ENCODE measurements at regions of chr7 and their contacts with region 1.

Region 1: DNA sequence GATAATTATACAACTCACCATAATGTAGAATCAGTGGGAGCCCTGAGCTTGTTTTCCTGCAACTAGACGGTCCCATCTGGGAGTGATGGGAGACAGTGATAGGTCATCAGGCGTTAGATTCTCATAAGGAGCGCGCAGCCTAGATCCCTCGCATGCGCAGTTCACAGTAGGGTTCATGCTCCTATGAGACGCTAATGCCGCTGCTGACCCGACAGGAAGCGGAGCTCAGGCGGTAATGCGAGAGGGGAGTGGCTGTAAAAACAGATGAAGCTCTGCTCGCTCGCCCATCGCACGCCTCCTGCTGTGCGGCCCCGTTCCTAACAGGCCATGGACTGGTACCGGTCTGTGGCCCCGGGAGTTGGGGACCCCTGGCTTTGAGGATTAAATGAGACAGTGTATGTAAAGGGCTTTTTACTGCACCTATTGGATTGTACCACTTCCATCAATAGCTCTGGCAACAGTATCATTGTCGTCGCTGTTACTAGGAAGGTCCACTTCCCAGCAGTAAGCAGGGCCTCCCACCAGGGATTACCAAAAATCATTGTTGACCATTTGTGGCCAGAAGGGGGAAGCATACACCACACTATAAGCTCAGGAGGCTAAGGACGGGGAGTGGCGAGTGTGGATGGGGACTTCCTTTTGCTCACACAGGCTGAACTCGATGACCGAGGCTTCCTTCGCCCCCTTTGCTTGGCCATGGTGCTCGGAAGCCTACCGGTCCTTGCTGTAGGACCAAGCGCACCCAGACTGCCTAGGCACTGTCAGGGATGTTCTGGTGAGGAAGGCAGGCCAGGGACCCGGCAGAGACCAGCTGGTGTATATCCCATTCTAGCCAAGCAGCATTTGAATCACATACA is 26.4 kb downstream of the AKR1B1 start:
- DNase-seq: peak; percentile 89
- ATAC-seq: peak; percentile 96
- H3K4me3 Mint-ChIP-seq: peak overlapping the region; percentile 71
- H3K27ac Mint-ChIP-seq: peak overlapping the region; percentile 89
- H3K4me1 Mint-ChIP-seq: peaks cover 16% of the 10 kb centered on the region
- H3K27me3 Mint-ChIP-seq: peaks cover 2% of the 10 kb centered on the region

Region 2: GRCh38 chr7:134293002-134293740 is 139.4 kb before region 1 on chr7:
- CTCF ChIA-PET with region 1: no interaction called
- DNase-seq: no peak
- ATAC-seq: no peak
- H3K4me3 Mint-ChIP-seq: no peak overlapping the region
- H3K27ac Mint-ChIP-seq: no peak overlapping the region
- H3K4me1 Mint-ChIP-seq: no peaks in the 10 kb centered on the region
- H3K27me3 Mint-ChIP-seq: no peaks in the 10 kb centered on the region

Region 3: DNA sequence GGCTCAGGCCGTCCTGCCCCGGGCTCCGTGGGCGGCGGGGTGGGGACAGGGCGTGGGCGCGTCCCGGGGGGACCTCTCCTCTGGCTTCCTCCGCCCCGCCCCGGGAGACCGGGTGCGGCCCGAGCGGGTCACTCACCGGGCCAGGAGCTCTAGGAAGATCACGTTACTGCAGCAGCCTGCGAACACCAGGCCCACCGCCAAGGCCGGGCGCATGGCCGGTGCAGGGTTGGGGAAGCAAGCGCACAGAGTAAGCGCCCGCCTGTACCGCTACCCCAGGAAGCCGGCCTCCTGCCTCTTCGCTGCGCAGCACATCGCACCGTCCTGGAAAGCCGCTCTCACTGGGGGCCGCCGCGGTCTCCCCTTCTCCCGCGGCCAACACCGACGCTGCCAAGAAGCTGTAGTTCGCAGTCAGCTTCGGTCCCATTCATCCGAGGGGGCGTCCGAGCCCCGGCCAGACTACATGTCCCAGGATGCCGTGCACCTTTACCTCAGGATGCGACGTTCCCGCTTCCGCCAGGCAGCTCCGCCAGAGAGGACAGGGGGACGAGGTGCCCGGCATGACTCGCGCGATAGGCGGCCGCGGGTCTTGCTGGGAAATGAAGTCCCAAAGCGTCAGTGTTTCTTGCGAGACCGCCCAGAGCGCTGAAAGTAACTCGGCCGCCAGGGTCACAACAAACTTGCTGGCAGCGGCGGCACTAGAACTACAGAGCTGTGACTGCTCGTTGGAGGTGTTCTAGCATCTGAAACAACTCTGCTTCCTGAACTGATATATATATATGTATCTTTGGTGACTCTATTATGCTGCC is 115.8 kb before region 1 on chr7 and contains the start of gene SLC35B4:
- CTCF ChIA-PET with region 1: interaction called, 11 read pairs
- DNase-seq: peak; percentile 98
- ATAC-seq: peak; percentile 98
- H3K4me3 Mint-ChIP-seq: peak within 1 kb of the TSS; percentile 87
- H3K27ac Mint-ChIP-seq: peak within 1 kb of the TSS; percentile 83
- H3K4me1 Mint-ChIP-seq: peaks cover 18% of the 10 kb centered on the region
- H3K27me3 Mint-ChIP-seq: peaks cover 6% of the 10 kb centered on the region
- total RNA-seq, gene SLC35B4: 16.1 to 18.0 TPM

Region 4: GRCh38 chr7:134458806-134459698 is 26.5 kb after region 1 on chr7 and contains the start of gene AKR1B1:
- CTCF ChIA-PET with region 1: interaction called, 38 read pairs
- DNase-seq: peak; percentile 93
- ATAC-seq: peak; percentile 93
- H3K4me3 Mint-ChIP-seq: peak within 1 kb of the TSS; percentile 81
- H3K27ac Mint-ChIP-seq: peak within 1 kb of the TSS; percentile 72
- H3K4me1 Mint-ChIP-seq: peaks cover 43% of the 10 kb centered on the region
- H3K27me3 Mint-ChIP-seq: no peaks in the 10 kb centered on the region
- total RNA-seq, gene AKR1B1: 96.2 to 113 TPM

Region 5: GRCh38 chr7:134514663-134515062 is 82.1 kb after region 1 on chr7:
- CTCF ChIA-PET with region 1: interaction called, 59 read pairs
- DNase-seq: no peak
- ATAC-seq: peak; percentile 74
- H3K4me3 Mint-ChIP-seq: no peak overlapping the region
- H3K27ac Mint-ChIP-seq: no peak overlapping the region
- H3K4me1 Mint-ChIP-seq: peaks cover 8% of the 10 kb centered on the region
- H3K27me3 Mint-ChIP-seq: peaks cover 23% of the 10 kb centered on the region

Region 6: DNA sequence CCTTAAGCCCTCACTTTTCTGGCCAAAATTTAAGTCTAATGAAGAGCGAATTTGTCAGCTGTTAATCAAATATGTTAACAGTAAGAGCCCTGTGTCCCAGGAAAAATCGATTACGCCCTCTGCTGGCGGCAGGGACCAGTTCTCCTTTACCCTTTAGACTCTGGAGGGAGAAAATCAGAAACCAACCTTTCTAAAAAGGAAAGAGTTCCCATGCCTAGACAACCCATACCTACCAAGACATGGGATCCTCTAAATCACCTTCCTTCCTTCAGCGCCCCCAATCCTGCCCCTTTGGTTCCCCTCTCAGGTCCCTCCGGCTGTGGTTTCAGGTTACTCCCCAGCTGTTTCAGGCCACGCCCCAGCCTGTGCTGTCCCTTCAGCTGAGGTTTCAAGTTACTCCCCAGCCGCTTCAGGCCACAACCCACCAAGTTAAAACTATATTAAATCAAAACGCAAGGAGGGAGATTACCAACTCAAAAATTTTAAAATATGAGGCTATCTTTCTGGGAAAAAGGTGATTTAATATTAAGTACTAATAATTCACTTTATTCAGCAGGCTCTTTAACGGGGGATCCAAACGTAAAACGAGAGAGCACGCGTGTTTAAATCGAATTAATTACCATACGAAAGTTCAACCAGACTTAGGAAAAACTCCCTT is 115.0 kb after region 1 on chr7:
- CTCF ChIA-PET with region 1: interaction called, 32 read pairs
- DNase-seq: peak; percentile 71
- ATAC-seq: peak; percentile 81
- H3K4me3 Mint-ChIP-seq: no peak overlapping the region
- H3K27ac Mint-ChIP-seq: no peak overlapping the region
- H3K4me1 Mint-ChIP-seq: peaks cover 9% of the 10 kb centered on the region
- H3K27me3 Mint-ChIP-seq: peaks cover 42% of the 10 kb centered on the region

Region 7: DNA sequence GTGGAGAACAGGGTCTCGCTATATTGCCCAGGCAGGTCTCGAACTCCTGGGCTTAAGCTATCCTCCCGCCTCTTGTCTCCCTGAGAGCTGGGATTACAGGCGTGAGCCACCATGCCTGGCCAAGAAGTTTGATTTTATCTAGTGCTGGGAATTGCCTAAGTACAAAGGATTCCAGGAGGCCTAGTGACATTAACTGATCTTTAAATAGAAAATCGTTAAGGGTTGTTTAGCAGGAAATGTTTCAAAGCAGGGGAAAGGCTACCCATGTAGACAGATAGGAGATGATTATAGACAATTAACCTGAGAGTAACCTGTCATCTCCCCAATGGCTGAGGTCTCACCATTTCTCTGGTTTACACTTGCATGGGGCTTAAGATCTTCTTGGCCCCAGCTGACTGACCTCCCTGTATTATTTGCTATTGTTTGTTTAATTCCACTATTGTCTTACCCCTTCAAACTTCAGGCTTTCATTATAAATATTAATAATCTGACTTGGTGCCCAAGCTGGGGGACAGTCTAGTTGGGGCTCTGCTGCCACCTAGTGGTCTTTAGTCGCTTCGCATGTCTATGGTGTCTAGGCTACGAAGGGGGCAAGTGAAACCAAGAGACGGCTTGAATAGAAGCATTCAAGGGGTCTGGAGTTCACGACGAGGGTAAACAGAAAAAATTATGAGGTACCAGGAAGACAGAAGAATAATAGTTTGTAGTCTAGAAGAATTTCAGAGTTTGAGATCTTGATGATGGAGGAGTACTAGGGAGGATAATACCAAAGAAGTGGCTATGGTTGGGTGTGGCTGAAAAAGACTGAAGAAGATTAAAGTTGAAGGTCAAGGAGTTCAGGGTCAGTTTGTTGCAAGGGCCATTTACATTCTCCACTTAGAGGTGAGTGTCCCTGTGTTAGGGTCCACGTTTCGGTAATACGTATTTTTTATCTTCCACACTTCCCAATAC is 173.7 kb after region 1 on chr7:
- CTCF ChIA-PET with region 1: interaction called, 27 read pairs
- DNase-seq: peak; percentile 73
- ATAC-seq: peak; percentile 93
- H3K4me3 Mint-ChIP-seq: peak overlapping the region; percentile 59
- H3K27ac Mint-ChIP-seq: no peak overlapping the region
- H3K4me1 Mint-ChIP-seq: peaks cover 10% of the 10 kb centered on the region
- H3K27me3 Mint-ChIP-seq: peaks cover 63% of the 10 kb centered on the region

Region 8: DNA sequence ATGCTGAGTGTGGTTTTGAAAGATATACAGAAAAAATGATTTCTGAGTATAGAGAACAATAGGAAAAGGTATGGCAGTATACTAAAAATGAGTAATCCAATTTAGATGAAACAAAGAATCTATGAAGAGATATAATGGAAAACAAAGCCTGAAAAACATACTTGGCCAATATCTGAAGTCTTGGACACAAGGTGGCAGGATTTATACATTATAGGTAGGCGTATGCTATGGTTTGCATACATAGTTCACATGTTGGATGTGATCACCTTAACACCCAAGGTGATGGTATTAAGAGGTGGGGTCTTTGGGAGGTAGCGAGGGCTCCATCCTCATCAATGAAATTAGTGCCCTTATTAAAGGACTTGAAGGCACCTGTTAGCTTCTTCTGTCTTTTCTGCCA is 179.7 kb after region 1 on chr7:
- CTCF ChIA-PET with region 1: interaction called, 27 read pairs
- DNase-seq: no peak
- ATAC-seq: no peak
- H3K4me3 Mint-ChIP-seq: no peak overlapping the region
- H3K27ac Mint-ChIP-seq: no peak overlapping the region
- H3K4me1 Mint-ChIP-seq: peaks cover 16% of the 10 kb centered on the region
- H3K27me3 Mint-ChIP-seq: peaks cover 38% of the 10 kb centered on the region